ENCODE measurements at regions of chr6 and their contacts with region 1.

Region 1: DNA sequence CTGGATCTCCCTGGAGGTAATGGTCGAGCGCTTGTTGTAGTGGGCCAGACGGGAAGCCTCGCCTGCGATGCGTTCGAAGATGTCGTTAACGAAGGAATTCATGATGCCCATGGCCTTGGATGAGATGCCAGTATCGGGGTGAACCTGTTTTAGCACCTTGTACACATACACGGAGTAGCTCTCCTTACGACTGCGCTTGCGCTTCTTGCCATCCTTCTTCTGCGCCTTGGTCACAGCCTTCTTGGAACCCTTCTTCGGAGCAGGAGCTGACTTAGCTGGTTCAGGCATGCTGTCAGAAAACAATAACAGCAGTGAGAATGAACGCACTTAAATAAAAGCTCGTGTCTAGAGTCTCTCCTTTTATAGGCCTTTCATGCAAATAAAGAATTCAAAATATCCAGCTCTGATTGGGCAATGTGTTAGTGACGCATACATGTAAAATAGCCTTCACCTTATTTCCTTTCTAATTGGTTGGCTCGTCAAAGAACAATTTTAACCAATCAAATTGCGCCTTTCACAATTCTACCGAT is 129.2 kb downstream of the HFE start:
- H3K4me3 ChIP-seq: peak overlapping the region; percentile 70
- H3K27ac ChIP-seq: no peak overlapping the region
- H3K4me1 ChIP-seq: no peaks in the 10 kb centered on the region
- CTCF ChIP-seq: no peak

Region 2: DNA sequence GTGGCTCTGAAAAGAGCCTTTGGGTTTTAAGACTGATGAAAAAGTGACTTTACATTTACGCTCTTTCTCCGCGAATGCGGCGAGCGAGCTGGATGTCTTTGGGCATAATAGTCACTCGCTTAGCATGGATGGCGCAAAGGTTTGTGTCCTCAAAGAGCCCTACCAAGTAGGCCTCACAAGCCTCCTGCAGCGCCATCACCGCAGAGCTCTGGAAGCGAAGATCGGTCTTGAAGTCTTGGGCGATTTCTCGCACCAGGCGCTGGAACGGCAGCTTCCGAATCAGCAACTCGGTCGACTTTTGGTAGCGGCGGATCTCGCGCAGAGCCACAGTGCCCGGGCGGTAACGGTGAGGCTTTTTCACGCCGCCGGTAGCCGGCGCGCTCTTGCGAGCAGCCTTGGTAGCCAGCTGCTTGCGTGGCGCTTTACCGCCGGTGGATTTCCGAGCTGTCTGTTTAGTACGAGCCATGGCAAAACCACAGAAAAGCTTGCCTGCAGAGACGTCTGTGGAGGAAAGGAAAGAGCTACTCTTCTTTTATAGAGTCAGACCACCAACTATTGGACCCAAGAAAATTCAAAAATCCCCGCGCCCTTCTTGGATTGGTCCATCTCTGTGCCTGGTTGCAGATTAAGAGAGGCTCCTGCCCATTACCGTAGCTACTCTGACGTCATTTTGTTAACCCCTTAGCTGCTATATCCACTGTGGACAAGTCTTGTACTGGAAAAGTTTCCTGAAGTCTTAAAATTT is 184.7 kb before region 1 on chr6:
- CTCF ChIA-PET with region 1: no interaction called
- POLR2A ChIA-PET with region 1: interaction called, 43 read pairs
- H3K4me3 ChIP-seq: peak overlapping the region; percentile 71
- H3K27ac ChIP-seq: peak overlapping the region; percentile 63
- H3K4me1 ChIP-seq: peaks cover 12% of the 10 kb centered on the region
- CTCF ChIP-seq: peak; percentile 85

Region 3: DNA sequence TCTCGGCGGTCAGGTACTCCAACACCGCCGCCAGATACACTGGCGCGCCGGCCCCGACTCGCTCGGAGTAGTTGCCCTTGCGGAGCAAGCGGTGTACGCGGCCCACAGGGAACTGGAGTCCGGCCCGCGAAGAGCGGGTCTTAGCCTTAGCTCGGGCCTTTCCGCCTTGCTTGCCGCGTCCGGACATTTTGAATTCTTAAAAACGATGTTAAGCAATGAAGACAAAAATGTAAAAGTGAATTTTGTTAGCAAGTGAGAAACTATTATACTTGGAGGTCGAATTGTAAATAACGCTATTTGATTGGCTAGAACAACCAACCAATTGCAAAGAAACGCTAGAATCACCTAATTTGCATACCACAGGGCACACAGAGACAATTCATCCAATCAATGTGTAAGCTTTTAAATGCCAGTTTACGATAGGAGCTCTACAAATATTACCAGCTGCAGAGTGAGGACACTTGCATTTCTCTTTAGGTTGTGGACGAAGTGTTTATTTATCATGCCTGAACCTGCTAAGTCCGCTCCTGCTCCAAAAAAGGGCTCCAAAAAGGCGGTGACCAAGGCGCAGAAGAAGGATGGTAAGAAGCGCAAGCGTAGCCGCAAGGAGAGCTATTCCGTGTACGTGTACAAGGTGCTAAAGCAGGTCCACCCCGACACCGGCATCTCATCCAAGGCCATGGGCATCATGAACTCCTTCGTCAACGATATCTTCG is 17.2 kb before region 1 on chr6:
- CTCF ChIA-PET with region 1: interaction called, 7 read pairs
- POLR2A ChIA-PET with region 1: interaction called, 109 read pairs
- H3K4me3 ChIP-seq: peak overlapping the region; percentile 45
- H3K27ac ChIP-seq: no peak overlapping the region; the same call in 1 of the 2 replicates
- H3K4me1 ChIP-seq: no peaks in the 10 kb centered on the region
- CTCF ChIP-seq: no peak

Region 4: GRCh38 chr6:26249957-26250697 is 33.7 kb after region 1 on chr6:
- CTCF ChIA-PET with region 1: interaction called, 3 read pairs
- POLR2A ChIA-PET with region 1: interaction called, 60 read pairs
- H3K4me3 ChIP-seq: peak overlapping the region; percentile 33
- H3K27ac ChIP-seq: peak overlapping the region; percentile 80
- H3K4me1 ChIP-seq: no peaks in the 10 kb centered on the region
- CTCF ChIP-seq: no peak

Region 5: DNA sequence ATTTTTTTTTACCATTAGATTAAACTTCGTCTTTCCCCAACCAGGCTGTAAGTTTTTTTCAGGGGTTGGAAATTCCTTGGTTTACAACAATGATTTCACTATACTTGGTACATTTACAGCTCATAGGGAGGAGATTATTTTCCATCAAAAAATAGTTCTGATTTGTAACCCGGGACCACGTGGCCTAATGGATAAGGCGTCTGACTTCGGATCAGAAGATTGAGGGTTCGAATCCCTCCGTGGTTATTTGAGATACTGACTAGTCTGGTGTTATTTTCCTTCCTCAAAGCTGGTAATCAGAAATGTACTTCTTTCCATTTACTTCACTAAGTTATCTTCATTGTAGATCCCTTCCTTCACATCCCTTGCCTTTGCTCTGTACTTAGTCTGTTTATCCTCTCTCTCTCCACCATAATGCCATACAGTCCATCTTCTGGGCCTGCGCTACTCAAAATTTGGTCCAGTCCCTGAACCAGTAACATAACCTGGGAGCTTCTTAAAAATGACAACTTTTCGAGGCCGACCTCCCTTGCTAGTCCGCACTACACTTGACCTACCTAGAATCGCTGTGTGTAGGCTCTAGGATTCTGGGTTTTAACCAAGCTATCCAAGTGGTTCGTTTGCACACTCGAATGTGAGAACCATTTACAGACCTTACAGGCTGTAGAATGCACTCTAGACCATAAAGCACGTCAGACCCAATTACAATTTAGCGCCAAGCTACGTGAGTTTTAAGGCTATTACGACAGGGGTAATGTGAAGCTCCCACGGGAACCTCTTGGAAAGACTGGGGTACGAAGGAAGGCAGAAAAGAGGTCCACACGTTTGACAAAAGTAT is 106.4 kb after region 1 on chr6:
- CTCF ChIA-PET with region 1: interaction called, 4 read pairs
- POLR2A ChIA-PET with region 1: interaction called, 13 read pairs
- H3K4me3 ChIP-seq: peak overlapping the region; percentile 80
- H3K27ac ChIP-seq: peak overlapping the region; percentile 70; the same call in 1 of the 2 replicates
- H3K4me1 ChIP-seq: no peaks in the 10 kb centered on the region
- CTCF ChIP-seq: no peak

Region 6: DNA sequence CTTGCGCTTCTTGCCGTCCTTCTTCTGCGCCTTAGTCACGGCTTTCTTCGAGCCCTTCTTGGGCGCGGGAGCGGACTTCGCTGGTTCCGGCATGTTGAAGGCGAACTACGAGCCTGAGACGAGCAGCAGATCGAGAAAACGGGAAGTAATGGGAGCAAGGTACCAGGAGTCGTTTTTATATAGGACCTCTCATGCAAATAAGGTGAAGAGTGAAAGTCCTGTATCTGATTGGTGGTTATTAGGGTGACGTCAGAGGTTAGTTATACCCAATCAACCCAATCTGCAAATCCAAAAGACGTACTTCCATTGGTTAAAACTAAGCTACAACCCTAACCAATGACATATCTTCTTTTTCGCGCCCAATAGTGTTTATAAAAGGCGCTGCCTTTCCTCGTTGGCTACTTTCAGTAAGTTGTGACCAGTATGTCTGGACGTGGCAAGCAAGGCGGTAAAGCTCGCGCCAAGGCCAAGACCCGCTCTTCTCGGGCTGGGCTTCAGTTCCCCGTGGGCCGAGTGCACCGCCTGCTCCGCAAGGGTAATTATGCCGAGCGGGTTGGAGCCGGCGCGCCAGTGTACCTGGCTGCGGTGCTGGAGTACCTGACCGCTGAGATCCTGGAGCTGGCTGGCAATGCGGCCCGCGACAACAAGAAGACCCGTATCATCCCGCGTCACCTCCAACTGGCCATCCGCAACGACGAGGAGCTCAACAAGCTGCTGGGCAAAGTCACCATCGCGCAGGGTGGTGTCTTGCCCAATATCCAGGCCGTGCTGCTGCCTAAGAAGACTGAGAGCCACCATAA is 930.5 kb after region 1 on chr6:
- CTCF ChIA-PET with region 1: no interaction called
- POLR2A ChIA-PET with region 1: interaction called, 23 read pairs
- H3K4me3 ChIP-seq: peak overlapping the region; percentile 55
- H3K27ac ChIP-seq: peak overlapping the region; percentile 81; the same call in 1 of the 2 replicates
- H3K4me1 ChIP-seq: no peaks in the 10 kb centered on the region
- CTCF ChIP-seq: 0 out of 2 replicates have a peak, but pooled peaks have one; percentile 14

Measured in HEK293 (cell line).